ENCODE measurements at regions of chr2 and their contacts with region 1.

Region 1: DNA sequence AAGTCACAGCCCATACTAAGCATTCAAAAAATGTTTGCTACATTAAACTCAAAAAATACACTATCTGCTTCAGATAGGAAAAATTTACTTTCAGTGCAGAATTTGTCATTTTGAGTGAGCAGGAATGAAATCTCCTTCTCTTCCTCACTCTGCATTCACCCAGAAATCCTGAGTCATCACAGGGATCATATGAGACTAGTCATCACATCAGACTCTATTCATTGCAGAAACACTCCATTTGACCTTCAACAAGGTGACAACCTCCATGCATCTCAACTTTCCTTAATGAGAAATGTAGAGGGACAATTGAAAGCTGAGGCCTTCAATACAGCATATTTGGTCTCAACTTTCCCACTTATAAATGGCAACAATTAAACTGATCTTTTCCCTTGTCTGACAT is 130.4 kb upstream of the CYP26B1 start:
- DNase-seq: peak; percentile 79
- ATAC-seq: peak; percentile 85
- H3K4me3 ChIP-seq: no peak overlapping the region
- H3K27ac ChIP-seq: no peak overlapping the region
- H3K4me1 ChIP-seq: peaks cover 11% of the 10 kb centered on the region
- H3K27me3 ChIP-seq: no peaks in the 10 kb centered on the region
- CTCF ChIP-seq: no peak
- POLR2A ChIP-seq: no peak
- RAD21 ChIP-seq: no peak

Region 2: GRCh38 chr2:72204156-72204785 is 73.8 kb before region 1 on chr2:
- CTCF ChIA-PET with region 1: no interaction called
- POLR2A ChIA-PET with region 1: no interaction called
- dilution Hi-C with region 1: no loop called
- in situ Hi-C with region 1: no loop called
- intact Hi-C with region 1: loop called (anchors 5 kb)
- DNase-seq: peak; percentile 53
- ATAC-seq: peak; percentile 76
- H3K4me3 ChIP-seq: no peak overlapping the region
- H3K27ac ChIP-seq: peak overlapping the region; percentile 81; the same call in 1 of the 2 replicates
- H3K4me1 ChIP-seq: peaks cover 13% of the 10 kb centered on the region
- H3K27me3 ChIP-seq: no peaks in the 10 kb centered on the region
- CTCF ChIP-seq: no peak
- POLR2A ChIP-seq: no peak
- RAD21 ChIP-seq: no peak

Region 3: DNA sequence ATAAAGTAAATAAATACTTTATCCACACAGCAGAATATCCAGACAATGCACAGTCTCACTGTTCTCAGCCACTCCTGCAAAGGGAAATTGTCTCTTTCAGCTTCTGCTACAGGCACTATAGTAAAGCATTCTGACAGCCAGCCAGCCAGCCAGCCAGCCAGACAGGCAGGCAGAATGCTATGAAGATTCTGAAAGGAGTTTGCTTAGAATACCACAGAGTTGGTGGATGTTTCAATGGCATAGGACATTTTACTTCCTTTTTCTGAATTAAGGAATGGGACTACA is 14.3 kb before region 1 on chr2:
- CTCF ChIA-PET with region 1: no interaction called
- POLR2A ChIA-PET with region 1: no interaction called
- dilution Hi-C with region 1: no loop called
- in situ Hi-C with region 1: no loop called
- intact Hi-C with region 1: loop called (anchors 1 kb)
- DNase-seq: no peak
- ATAC-seq: peak; percentile 61
- H3K4me3 ChIP-seq: no peak overlapping the region
- H3K27ac ChIP-seq: no peak overlapping the region
- H3K4me1 ChIP-seq: no peaks in the 10 kb centered on the region
- H3K27me3 ChIP-seq: no peaks in the 10 kb centered on the region
- CTCF ChIP-seq: no peak
- POLR2A ChIP-seq: no peak
- RAD21 ChIP-seq: no peak

Measured in IMR-90 (cell line).